Left colon (tissue), 2 donors: ENCODE measurements at regions of chr1 and their contacts with region 1.

Region 1: GRCh38 chr1:68120136-68120791 is 69.8 kb upstream of the DIRAS3 start:
- DNase-seq: no peak
- ATAC-seq: peak; percentile 73

Region 2: DNA sequence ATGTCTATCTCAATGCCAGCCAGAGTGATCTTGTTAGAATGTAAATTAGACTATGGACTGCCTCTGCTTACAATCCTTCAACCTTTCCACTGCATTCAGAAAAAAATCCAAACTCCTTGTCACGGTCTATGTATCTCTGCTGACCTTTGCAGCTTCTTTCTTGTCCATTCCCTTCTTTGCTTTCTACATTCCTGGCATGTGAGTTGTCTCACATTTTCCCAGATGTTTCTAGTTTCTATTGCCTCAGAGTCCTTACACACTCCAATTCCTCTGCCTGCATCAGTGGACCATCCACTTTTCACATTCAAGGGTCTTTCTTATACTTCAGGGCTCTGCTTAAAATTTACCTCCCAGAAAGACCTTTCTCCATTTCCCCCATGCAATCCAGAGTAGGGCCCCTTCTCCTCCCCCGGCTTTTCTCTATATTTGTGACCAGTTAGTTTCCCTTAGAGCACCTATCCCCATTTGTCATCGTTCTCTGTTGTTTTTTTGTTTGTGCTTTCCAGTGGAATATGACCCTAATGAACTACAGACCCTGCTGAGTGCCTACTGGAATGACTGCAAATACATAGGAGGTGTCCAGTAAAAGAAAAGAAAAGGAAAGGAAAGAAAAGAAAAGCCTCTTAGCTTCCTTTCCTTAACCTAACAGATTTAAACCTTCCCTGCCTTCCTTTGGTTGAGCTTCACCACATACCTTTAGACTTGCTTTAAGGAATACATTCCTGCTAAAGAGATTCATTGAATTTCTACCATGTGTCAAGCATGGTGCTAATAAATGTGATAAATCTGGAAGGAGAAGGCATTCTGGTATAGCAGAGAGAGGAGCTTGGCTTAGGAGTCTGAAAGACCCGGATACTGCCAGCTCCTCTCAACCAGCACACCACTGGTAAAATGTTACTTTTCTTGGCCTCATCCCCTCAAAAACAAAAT is 171.8 kb before region 1 on chr1:
- intact Hi-C with region 1: no loop called
- DNase-seq: no peak
- ATAC-seq: no peak

Region 3: DNA sequence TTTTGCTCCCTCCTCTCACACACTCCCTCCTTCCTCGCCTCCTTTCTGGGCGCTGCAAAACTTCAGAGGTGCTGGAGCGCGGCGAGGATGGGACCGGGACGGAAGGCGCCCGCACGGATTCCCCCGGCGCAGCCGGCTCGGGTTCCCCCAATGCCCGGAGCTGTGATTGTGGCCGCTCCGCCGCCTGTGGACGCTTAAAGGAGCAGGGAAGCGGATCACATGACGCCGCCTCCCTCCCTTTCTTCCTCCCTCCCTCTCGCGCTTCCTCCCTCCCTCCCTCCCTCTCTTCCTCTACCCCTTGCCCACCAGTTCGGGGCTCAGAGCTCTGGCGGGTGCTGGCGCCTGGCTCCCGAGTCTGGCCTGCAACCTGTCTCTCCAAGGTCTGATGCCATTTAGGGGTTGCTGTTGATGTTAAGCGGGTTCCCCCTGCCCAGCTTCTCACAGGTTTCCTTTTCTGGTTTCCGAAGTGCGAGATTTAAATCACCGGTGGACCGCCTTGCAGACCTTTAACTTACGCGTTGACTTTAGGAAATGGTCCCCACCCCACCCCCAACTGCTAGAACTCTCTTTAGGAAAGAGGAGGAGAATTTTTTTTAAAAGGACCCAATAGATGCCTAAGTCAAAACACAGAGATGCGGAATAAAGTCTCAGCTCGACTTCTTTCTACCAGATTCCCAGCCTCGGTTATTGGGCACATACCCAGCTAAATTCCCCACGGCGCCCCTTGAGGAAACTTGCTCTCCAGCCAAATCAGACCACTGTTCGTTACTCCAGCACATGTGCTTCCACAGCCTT is 112.3 kb after region 1 on chr1 and contains the start of gene WLS:
- intact Hi-C with region 1: loop called in 1 of 2 experiments (anchors 5 kb)
- DNase-seq: peak; percentile 84 to 86
- ATAC-seq: peak; percentile 87
- total RNA-seq, gene WLS: 126 to 150 TPM

Region 4: GRCh38 chr1:68321084-68321685 is 200.9 kb after region 1 on chr1:
- intact Hi-C with region 1: loop called in 1 of 2 experiments (anchors 5 kb)
- DNase-seq: peak; percentile 70 to 83
- ATAC-seq: peak; percentile 100

Region 5: GRCh38 chr1:68346188-68346808 is 226.0 kb after region 1 on chr1:
- intact Hi-C with region 1: loop called (anchors 5 to 10 kb)
- DNase-seq: no peak
- ATAC-seq: no peak